ENCODE measurements at regions of chr11 and their contacts with region 1.

Region 1: DNA sequence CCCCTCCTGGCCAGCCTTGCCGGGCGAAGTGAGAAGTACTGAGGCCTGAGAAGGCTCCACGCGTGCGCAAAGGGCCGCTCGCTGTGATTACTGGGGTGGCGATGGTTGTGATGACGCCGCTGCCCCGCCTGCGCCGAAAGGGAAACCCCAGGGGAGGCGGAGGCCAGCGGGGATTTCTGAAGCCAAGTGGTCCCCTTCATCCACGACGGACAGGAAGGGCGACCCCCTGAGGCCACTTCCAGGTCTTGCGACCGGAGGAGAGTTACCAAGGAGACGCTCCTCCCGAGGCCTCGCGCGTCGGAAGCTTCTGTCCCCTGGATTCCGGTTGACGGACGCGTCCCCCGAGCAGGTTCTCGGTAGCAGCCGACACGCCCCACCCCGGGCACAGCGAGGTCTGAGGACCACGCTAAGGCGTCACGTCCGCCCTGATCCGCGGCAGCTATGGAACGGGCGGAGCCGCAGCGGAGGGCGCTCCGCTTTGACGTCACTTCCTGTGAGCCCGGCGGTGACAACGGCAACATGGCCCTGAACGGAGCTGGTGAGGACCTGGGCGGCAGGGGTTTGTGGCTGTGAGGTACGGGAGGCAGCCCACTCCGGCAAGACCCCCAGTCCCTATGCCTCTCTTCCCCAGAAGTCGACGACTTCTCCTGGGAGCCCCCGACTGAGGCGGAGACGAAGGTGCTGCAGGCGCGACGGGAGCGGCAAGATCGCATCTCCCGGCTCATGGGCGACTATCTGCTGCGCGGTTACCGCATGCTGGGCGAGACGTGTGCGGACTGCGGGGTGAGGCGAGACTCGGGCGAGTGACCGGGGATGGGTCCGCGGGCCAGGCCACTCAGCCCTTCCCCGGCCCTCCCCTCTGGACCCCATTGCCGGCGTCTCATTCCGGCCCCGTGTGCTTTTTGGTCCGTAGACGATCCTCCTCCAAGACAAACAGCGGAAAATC is at the start of gene ZNRD2:
- DNase-seq: peak; percentile 97 to 98 (median 98)
- H3K4me3 ChIP-seq: peak within 1 kb of the TSS; percentile 88 to 100 (median 96)
- H3K4me3 Mint-ChIP-seq: peak within 1 kb of the TSS; percentile 95 to 98
- H3K27ac ChIP-seq: peak within 1 kb of the TSS; percentile 95 to 96
- H3K27ac Mint-ChIP-seq: peak within 1 kb of the TSS; percentile 95 to 98 (median 98)
- H3K4me1 ChIP-seq: peaks cover 60 to 70% of the 10 kb centered on the region in 2 donors
- H3K4me1 Mint-ChIP-seq: peaks cover 68% of the 10 kb centered on the region
- H3K27me3 ChIP-seq: no peaks in the 10 kb centered on the region
- H3K27me3 Mint-ChIP-seq: peaks cover 0 to 2% (median 0%) of the 10 kb centered on the region in 3 donors
- CTCF ChIP-seq: peak; percentile 26
- polyA plus RNA-seq, gene ZNRD2: 48.5 to 65.1 (median 56.2) TPM

Region 2: DNA sequence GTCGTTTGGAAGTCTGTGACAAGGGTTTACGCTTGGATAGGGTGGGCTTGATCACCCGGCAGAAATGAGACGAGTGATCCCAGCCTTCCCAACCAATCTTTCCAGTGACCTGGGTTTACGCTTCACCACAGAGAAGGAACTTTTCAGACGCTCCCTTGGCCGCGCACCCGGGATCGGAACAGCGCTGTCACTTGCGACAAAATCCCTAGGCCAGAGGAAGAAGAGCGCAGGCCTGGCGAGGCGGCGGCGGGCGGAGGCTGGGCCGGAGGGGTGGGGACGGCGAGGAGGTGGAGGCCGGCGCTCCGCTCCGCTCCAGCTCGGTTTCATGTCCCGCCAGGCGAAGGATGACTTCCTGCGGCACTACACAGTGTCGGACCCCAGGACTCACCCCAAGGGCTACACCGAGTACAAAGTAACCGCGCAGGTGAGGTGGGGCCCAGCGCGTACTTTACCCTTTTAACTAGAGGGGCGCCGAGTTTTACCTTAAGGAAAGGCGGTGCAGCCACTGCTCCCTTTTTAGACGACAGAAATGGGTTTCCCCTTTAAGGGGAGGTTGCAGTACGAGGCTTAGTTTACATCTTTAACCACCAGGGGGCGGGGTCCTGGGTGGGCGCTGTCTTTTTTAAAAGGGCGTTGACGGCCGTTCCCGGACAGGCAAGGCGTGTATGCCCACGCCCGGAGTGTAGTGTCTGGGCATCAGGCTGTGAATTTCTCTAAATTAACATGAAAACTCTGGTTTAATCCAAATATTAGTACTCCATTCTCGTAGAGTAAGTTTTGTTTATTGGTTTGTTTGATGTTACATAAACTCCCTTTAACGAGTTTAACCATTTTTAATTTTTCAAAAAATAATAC is 542.8 kb before region 1 on chr11 and contains the start of gene SNX15:
- intact Hi-C with region 1: loop called in 1 of 2 experiments (anchors 10 kb)
- DNase-seq: peak; percentile 87 to 93 (median 88)
- H3K4me3 ChIP-seq: peak within 1 kb of the TSS; percentile 45 to 78 (median 66)
- H3K4me3 Mint-ChIP-seq: peak within 1 kb of the TSS; percentile 78 to 83
- H3K27ac ChIP-seq: peak within 1 kb of the TSS; percentile 63 to 78
- H3K27ac Mint-ChIP-seq: peak within 1 kb of the TSS; percentile 71 to 95 (median 90)
- H3K4me1 ChIP-seq: peaks cover 14 to 20% of the 10 kb centered on the region in 2 donors
- H3K4me1 Mint-ChIP-seq: peaks cover 25% of the 10 kb centered on the region
- H3K27me3 ChIP-seq: no peaks in the 10 kb centered on the region
- H3K27me3 Mint-ChIP-seq: peaks cover 0 to 1% (median 0%) of the 10 kb centered on the region in 3 donors
- CTCF ChIP-seq: peak; percentile 90
- polyA plus RNA-seq, gene SNX15: 16.2 to 26.7 (median 17.8) TPM

Region 3: DNA sequence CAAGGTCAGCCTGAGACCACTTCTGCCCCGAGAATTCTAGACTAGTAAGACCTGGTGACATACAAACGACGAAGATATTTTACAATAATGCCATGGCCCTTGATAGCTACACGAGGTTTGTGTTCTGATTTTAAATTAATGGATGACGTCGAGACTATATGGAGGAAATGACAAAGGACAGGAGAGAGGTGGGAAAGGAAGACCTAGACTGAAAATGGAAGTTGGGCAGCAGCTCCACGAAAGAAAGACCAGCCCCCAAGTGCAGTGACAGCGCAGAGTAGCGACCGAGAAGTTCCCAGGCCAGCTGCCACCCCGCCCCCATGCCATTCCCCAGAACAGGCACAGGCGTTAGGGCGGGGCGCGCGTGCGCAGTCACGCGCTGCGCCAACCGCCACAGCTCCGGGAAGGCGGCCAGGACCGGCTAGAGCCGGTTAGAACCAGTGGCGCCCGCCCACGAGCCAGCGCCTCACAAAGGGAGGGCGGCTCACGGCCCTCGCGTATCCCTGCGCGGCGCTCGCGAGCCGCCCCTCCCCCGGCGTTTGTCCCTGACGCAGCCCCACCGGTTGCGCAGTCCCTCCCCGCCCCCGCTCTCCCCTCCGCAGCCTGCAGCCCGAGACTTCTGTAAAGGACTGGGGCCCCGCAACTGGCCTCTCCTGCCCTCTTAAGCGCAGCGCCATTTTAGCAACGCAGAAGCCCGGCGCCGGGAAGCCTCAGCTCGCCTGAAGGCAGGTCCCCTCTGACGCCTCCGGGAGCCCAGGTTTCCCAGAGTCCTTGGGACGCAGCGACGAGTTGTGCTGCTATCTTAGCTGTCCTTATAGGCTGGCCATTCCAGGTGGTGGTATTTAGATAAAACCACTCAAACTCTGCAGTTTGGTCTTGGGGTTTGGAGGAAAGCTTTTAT is 72.9 kb before region 1 on chr11:
- intact Hi-C with region 1: no loop called
- DNase-seq: peak; percentile 99
- H3K4me3 ChIP-seq: peak overlapping the region; percentile 96 to 100 (median 99)
- H3K4me3 Mint-ChIP-seq: peak overlapping the region; percentile 82 to 90
- H3K27ac ChIP-seq: peak overlapping the region; percentile 98
- H3K27ac Mint-ChIP-seq: peak overlapping the region in 5 of 7 donors; percentile 96 to 98 (median 98)
- H3K4me1 ChIP-seq: peaks cover 47 to 55% of the 10 kb centered on the region in 2 donors
- H3K4me1 Mint-ChIP-seq: peaks cover 40% of the 10 kb centered on the region
- H3K27me3 ChIP-seq: no peaks in the 10 kb centered on the region
- H3K27me3 Mint-ChIP-seq: no peaks in the 10 kb centered on the region
- CTCF ChIP-seq: no peak

Region 4: DNA sequence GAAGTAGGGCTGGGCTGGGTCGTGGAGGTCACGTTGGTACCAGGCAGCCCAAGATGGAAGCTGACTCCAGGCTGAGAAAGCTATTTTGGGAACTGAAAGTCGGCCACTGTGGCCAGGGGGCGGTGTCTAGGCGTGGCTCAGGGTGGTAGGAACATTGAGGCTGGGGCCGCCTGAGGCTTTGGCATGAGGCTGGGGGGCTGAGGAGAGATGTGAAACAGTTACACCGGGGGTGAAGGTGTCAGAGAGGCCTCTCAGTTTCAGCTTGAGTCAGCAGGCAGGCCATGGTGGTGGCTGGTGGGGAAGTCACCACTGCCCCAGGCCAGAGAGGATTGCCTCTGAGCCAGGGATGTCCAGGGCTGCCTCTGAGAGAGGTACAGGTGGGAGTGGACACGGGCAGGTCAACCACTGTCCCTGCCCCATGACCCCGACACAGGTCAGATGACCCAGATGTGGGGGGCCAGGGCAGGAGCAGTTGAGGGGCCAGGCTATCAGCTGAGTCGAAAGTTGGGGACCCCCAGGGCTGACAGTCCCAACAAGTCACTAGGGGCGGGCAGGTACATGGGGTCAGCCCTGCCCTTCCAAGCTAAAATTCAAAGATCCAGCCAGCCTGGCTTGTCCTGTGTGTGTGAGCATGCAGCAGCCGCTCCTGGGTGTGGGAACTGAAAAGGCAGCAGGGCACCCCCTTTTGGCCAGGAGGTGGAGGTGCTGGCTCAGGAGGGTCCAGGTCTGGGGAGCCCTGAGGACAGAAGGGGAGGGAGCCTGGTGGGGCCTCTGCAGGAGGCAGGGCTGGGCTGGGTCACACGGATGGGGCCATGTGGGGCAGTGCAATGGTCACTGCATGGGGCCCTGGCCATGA is 18.2 kb after region 1 on chr11:
- intact Hi-C with region 1: loop called in 1 of 2 experiments (anchors 1 kb)
- DNase-seq: peak; percentile 66 to 83 (median 81)
- H3K4me3 ChIP-seq: peak overlapping the region; percentile 14 to 74 (median 16)
- H3K4me3 Mint-ChIP-seq: peak overlapping the region; percentile 73 to 87
- H3K27ac ChIP-seq: peak overlapping the region; percentile 86 to 89
- H3K27ac Mint-ChIP-seq: peak overlapping the region; percentile 91 to 98 (median 95)
- H3K4me1 ChIP-seq: peaks cover 44 to 63% of the 10 kb centered on the region in 2 donors
- H3K4me1 Mint-ChIP-seq: peaks cover 57% of the 10 kb centered on the region
- H3K27me3 ChIP-seq: no peaks in the 10 kb centered on the region
- H3K27me3 Mint-ChIP-seq: no peaks in the 10 kb centered on the region
- CTCF ChIP-seq: peak; percentile 73

Region 5: DNA sequence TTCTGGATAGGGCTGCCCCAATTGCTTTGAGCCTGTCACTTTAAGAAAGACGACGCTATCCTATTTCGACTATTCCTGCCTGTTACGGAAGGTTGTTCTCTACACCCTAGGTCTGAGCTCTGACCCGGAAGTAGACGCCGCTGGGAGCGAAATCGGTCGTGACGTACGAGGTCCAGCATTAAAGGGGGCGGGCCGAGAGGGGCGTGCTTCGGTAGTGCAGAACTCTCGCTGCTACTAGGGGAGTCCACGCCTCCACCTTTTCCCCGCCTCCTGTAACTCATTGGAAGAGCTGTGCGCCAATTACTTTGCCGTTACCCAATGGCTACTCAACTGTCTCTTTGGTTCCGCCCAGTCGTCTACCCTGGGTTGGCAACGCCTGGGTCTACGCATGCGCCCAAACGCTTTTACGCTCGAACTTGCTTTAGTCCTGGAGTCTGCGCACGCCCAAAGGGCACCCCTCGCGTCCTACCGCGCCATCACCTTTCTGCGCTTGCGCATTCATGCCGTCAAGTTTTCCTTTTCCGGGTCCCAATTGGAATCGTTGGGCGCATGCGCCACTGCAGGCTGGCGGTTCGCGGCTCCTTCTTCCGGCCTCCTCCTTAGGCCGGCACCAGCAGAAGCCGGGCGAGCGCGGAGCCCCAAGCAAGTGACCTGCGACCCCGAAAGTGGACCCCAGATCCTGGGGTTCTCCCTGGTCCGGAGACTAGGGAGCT is 45.1 kb after region 1 on chr11 and contains the start of gene PCNX3:
- intact Hi-C with region 1: loop called (anchors 2 to 5 kb)
- DNase-seq: peak; percentile 100
- H3K4me3 ChIP-seq: peak within 1 kb of the TSS; percentile 79 to 96 (median 93)
- H3K4me3 Mint-ChIP-seq: peak within 1 kb of the TSS; percentile 89 to 96
- H3K27ac ChIP-seq: peak within 1 kb of the TSS; percentile 94 to 96
- H3K27ac Mint-ChIP-seq: peak within 1 kb of the TSS; percentile 96 to 99 (median 98)
- H3K4me1 ChIP-seq: peaks cover 40 to 54% of the 10 kb centered on the region in 2 donors
- H3K4me1 Mint-ChIP-seq: peaks cover 39% of the 10 kb centered on the region
- H3K27me3 ChIP-seq: no peaks in the 10 kb centered on the region
- H3K27me3 Mint-ChIP-seq: no peaks in the 10 kb centered on the region
- CTCF ChIP-seq: no peak
- polyA plus RNA-seq, gene PCNX3: 0.58 to 36.4 (median 1.7) TPM

Region 6: DNA sequence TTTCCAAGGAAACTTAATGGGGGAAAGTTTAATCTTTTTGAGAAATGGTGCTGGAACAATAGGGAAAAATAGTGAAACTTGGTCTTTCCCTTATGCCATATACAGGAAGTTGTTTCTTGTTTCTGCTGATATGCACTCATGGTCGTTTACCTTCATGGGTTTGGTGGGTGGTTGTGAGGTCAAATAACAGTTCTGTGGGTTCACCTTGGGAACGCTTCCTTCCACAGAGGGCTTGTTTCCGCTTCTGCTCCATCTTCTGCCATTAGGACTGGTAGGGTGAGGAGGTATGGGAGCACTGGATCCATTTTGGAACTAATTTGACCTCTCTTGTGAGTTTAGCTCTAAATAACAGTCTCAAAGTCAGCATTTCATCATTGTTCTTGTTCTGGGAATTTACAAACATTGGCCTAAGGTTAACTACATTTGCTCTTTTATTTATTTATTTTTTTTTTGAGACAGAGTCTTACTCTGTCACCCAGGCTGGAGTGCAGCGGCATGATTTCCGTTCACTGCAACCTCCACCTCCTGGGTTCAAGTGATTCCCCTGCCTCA is 110.0 kb after region 1 on chr11:
- intact Hi-C with region 1: no loop called
- DNase-seq: no peak
- H3K4me3 ChIP-seq: no peak overlapping the region
- H3K4me3 Mint-ChIP-seq: no peak overlapping the region
- H3K27ac ChIP-seq: no peak overlapping the region
- H3K27ac Mint-ChIP-seq: no peak overlapping the region
- H3K4me1 ChIP-seq: no peaks in the 10 kb centered on the region
- H3K4me1 Mint-ChIP-seq: no peaks in the 10 kb centered on the region
- H3K27me3 ChIP-seq: no peaks in the 10 kb centered on the region
- H3K27me3 Mint-ChIP-seq: peaks cover 0 to 5% (median 3%) of the 10 kb centered on the region in 3 donors
- CTCF ChIP-seq: no peak

Measured in CD14-positive monocyte (primary cell).